ENCODE measurements at regions of chr7 and their contacts with region 1.

Region 1: DNA sequence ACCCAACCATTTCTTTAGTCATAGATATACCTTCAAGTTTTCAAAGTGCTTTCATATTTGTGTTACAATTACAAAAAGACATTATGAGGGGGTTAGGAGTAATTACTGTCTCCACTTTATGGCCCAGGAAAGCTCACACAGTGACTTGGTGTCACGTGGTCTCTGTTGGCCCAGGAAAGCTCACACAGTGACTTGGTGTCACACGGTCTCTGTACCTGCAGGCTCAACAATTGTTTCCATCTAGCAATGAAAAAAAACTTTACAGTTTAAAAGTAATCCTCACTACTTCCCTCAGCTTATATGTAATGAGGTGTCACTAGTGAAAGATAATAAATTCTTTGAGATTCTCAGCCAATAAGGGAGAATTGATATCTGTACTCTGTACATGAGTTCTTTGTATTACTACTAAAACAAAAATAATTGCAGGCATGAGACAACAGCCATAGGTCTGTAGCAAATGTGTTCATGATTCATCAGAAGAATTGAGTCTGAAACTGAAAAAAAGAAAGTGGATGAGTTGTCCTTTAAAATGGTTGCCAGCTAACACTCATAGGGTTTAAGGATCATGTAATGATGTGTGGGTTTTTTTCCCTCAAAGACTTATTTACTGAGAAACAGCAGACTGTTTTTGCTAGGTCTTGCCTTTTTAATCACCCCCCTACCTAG is 10.9 kb downstream of the OGDH start:
- DNase-seq: no peak
- H3K4me3 Mint-ChIP-seq: peak overlapping the region; percentile 72
- H3K27ac Mint-ChIP-seq: peak overlapping the region; percentile 95
- H3K4me1 Mint-ChIP-seq: peaks cover 73% of the 10 kb centered on the region
- H3K27me3 Mint-ChIP-seq: no peaks in the 10 kb centered on the region

Region 2: DNA sequence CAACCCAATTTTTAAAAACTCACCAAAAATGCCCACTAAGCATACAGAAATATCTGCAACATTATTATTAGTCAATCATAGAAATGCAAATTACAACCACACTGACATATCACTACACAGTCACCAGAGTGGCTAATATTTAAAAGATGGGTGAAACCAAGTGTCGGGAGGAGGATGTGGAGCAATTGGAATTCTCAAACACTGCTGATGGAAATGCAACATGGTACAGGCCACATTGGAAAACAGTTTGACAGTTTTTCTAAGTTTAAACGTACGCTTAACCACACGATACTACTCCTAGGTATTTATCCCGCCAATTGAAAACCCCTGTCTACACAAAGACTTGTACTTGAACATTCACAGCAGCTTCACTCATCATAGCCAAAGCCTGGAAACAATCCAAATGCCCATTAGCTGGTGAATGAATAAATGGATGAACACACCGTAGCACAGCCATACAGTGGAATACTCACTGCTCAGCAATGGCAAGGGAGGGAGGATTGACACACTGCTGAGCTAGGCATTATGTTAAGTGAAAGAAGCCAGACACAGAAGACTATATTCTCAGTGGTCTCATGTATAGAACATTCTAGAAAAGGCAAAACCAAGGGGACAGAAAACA is 444.4 kb before region 1 on chr7:
- intact Hi-C with region 1: no loop called
- DNase-seq: no peak
- H3K4me3 Mint-ChIP-seq: no peak overlapping the region
- H3K27ac Mint-ChIP-seq: no peak overlapping the region
- H3K4me1 Mint-ChIP-seq: no peaks in the 10 kb centered on the region
- H3K27me3 Mint-ChIP-seq: peaks cover 16% of the 10 kb centered on the region

Region 3: DNA sequence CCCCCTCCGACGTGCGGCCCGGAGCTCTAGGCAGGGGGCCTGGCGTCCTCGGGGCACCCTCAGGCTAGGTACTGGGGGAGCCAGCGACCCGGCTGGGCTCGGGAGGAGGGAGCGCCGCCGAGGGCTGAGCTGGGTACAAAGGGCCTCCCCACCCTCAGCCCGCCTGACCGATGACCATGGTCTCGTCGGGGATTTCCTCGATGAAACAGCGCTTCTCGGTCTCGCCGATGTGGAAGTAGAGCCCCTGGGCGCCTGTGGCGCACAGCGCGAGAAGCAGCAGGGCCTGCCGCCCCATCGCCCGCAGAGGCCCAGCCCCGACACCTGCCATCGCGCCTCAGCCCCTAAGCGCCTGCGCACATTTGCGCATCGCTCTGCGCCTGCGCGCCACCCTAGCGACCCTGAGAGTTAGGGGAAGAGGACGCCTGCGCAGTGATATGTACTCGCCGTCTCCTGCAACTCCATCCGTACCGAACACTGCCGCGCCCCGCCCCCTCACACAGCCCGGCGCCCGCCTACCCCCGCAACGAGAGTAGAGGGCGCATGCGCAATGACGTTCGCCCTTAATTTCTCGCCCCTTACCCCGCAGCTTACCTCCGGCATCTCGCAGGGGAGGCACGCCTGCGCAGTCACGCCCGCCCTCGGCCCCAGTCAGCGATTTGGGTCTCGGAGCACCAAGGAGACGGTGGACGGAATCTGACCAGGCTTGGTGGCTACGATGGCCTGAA is 35.3 kb before region 1 on chr7 and contains the start of gene TMED4:
- intact Hi-C with region 1: loop called (anchors 1 kb)
- DNase-seq: peak; percentile 100
- H3K4me3 Mint-ChIP-seq: peak within 1 kb of the TSS; percentile 93
- H3K27ac Mint-ChIP-seq: peak within 1 kb of the TSS; percentile 93
- H3K4me1 Mint-ChIP-seq: peaks cover 33% of the 10 kb centered on the region
- H3K27me3 Mint-ChIP-seq: no peaks in the 10 kb centered on the region
- total RNA-seq, gene TMED4: 74.9 and 79.6 TPM in 2 replicates

Region 4: GRCh38 chr7:44633254-44634186 is 16.2 kb after region 1 on chr7:
- intact Hi-C with region 1: loop called (anchors 1 kb)
- DNase-seq: peak; percentile 45
- H3K4me3 Mint-ChIP-seq: peak overlapping the region; percentile 64
- H3K27ac Mint-ChIP-seq: peak overlapping the region; percentile 87
- H3K4me1 Mint-ChIP-seq: peaks cover 84% of the 10 kb centered on the region
- H3K27me3 Mint-ChIP-seq: no peaks in the 10 kb centered on the region

Region 5: GRCh38 chr7:44735403-44736165 is 118.2 kb after region 1 on chr7:
- intact Hi-C with region 1: loop called (anchors 1 kb)
- DNase-seq: peak; percentile 42
- H3K4me3 Mint-ChIP-seq: peak overlapping the region; percentile 50
- H3K27ac Mint-ChIP-seq: peak overlapping the region; percentile 89
- H3K4me1 Mint-ChIP-seq: peaks cover 29% of the 10 kb centered on the region
- H3K27me3 Mint-ChIP-seq: peaks cover 2% of the 10 kb centered on the region

Region 6: DNA sequence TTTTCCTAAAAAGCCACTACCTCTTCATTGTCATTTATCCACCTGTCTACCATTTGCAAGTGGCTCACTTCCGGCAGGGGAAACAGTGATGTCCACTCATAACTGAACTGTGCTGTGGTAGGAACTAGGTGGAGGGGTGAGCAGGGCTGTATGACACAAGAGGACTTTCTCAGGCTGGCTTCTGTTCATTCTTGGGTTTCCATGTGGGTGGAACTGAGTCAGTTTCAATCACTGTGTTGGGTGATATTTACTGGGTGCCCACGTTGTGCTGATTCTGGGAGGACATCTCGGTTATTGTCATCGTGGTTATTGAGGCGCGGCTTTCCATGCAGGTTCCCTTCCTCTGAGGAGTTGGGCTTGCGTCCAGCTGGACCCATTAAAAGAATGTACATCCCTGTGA is 579.0 kb after region 1 on chr7:
- intact Hi-C with region 1: loop called (anchors 1 kb)
- DNase-seq: peak; percentile 14
- H3K4me3 Mint-ChIP-seq: no peak overlapping the region
- H3K27ac Mint-ChIP-seq: peak overlapping the region; percentile 83
- H3K4me1 Mint-ChIP-seq: peaks cover 67% of the 10 kb centered on the region
- H3K27me3 Mint-ChIP-seq: peaks cover 4% of the 10 kb centered on the region

Measured in activated T-helper 1 cell treated with anti-CD3 and anti-CD28 coated beads, Interleukin-12 subunit alpha, Interleukin-12 subunit beta, Interleukin-2, Interleukin-4 antibody, amounts not matched to agents 30 ng/mL and 10 ng/mL and 1 ng/mL, durations not matched to agents 14 hours and 24 hours and 36 hours (primary cell).